Endothelial cell of umbilical vein (primary cell): ENCODE measurements at regions of chr11 and their contacts with region 1.

Region 1: DNA sequence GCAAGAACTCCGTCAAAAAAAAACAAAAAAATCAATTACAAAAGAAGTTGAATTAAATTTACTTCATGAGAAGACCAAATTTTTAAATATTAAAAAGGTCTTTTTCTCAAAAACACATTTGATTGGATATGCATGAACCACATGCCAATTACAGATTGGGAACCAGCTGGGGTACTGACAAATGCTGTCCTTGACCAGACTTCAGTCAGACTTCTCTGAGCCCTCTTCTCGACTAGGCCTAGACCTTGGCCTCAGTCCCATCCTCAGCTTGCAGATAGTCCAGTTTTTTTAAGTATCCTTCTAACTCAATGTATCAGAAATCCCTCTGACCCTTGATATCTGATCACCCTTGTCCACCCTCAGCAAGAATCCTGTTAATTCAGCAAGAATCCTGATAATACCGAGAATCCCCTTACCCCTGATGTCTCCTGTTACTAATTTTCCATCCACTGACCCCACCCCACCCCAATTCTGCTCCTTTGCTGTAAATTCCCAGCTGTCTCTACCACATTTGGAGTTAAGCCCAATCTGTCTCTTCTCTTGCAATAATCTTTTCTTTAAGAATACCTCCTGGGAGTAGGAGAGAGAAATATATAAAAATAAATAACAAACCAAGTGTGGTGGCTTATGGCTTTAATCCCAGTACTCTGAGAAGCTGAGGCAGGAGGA is 30.9 kb downstream of the OR4D9 start:
- DNase-seq: no peak
- H3K4me3 ChIP-seq: no peak overlapping the region
- H3K27ac ChIP-seq: no peak overlapping the region
- H3K4me1 ChIP-seq: peaks cover 14% of the 10 kb centered on the region
- H3K27me3 ChIP-seq: no peaks in the 10 kb centered on the region
- CTCF ChIP-seq: no peak
- POLR2A ChIP-seq: no peak

Region 2: DNA sequence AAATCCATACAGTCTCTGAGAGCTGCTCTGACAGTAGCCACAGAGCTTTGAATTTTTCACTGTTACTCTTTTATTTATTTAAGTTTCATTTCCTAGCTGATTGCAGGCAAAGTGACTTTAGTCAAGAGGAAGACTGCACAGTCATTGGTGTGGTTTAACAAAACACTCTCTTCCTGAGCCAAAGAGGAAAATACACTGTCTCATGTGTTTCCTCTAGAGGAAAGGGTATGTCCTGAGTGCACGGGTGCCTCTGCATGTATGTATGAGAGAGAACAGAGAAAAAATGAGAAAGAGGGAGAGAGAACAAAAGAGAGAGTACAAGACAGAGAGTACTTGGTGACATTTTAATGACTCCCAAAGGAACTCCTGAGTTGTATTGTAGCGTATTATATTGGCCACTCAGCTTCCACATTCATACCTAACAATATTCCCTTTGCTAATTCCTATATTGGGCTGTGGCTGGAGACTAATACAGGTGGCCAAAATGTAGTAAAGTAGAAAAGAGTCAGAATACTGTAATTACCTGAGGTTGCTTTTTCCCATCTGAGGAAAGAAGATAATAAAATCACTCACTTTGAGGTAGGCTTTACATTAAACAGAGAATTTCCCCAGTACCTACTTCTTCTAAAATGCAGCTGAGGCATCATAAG is 31.2 kb before region 1 on chr11 and contains the start of gene OR4D9:
- CTCF ChIA-PET with region 1: interaction called, 14 read pairs
- POLR2A ChIA-PET with region 1: no interaction called
- dilution Hi-C with region 1: no loop called
- intact Hi-C with region 1: no loop called
- DNase-seq: peak; percentile 83
- H3K4me3 ChIP-seq: peak within 1 kb of the TSS in 1 of 3 experiments; percentile 30
- H3K27ac ChIP-seq: peak within 1 kb of the TSS; percentile 50
- H3K4me1 ChIP-seq: peaks cover 17% of the 10 kb centered on the region
- H3K27me3 ChIP-seq: no peaks in the 10 kb centered on the region
- CTCF ChIP-seq: no peak
- POLR2A ChIP-seq: no peak
- total RNA-seq, gene OR4D9: not detected in 2 replicates

Region 3: DNA sequence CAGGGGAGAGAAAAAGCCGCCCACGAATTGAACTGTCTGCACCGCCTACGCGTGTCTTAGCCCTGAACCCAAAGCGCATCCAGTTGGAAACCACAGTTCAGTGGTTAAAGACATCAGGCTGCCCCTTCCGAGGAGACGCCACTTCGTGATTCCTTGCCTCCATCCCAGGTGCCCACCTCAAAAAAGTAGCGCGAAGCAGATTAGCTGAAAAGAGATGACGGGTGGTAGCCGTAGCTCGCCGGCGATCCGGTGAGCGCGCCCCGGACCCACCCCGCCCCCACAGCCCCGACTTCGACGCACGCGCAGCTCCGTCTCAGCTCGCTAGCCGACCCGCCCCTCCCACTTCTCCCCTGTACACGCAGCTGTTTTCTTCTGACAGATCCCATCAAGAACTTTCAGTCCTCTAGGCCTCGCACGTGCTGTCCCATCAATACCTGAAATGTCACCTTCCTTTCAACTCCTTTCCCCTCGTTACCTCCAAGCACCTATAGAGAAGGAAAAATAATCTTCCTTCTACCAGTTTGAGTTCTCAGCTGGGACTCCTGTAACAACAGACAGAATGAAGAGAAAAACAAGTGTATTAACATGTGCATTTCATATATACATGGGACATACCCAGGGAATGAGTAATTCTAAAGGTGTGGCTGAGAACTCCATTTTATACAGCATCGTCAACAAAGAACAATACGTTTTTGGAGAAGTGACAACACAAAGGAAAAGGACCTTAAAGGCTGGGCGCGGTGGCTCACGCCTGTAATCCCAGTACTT is 18.6 kb after region 1 on chr11:
- CTCF ChIA-PET with region 1: interaction called, 8 read pairs
- POLR2A ChIA-PET with region 1: interaction called, 7 read pairs
- dilution Hi-C with region 1: no loop called
- intact Hi-C with region 1: loop called (anchors 1 kb)
- DNase-seq: peak; percentile 88
- H3K4me3 ChIP-seq: peak overlapping the region; percentile 50 to 93 (median 70)
- H3K27ac ChIP-seq: peak overlapping the region; percentile 60
- H3K4me1 ChIP-seq: peaks cover 9% of the 10 kb centered on the region
- H3K27me3 ChIP-seq: no peaks in the 10 kb centered on the region
- CTCF ChIP-seq: no peak
- POLR2A ChIP-seq: no peak

Region 4: GRCh38 chr11:59615637-59616395 is 73.5 kb after region 1 on chr11 and contains the start of gene OSBP:
- CTCF ChIA-PET with region 1: interaction called, 8 read pairs
- POLR2A ChIA-PET with region 1: interaction called, 3 read pairs
- dilution Hi-C with region 1: no loop called
- intact Hi-C with region 1: loop called (anchors 2 kb)
- DNase-seq: peak; percentile 100
- H3K4me3 ChIP-seq: peak within 1 kb of the TSS; percentile 74 to 90 (median 81)
- H3K27ac ChIP-seq: peak within 1 kb of the TSS; percentile 62
- H3K4me1 ChIP-seq: peaks cover 17% of the 10 kb centered on the region
- H3K27me3 ChIP-seq: no peaks in the 10 kb centered on the region
- CTCF ChIP-seq: no peak
- POLR2A ChIP-seq: peak; percentile 84
- total RNA-seq, gene OSBP: 37.5 and 37.9 TPM in 2 replicates

Region 5: GRCh38 chr11:59680287-59681154 is 138.2 kb after region 1 on chr11:
- CTCF ChIA-PET with region 1: interaction called, 13 read pairs
- POLR2A ChIA-PET with region 1: no interaction called
- dilution Hi-C with region 1: no loop called
- intact Hi-C with region 1: loop called (anchors 1 kb)
- DNase-seq: peak; percentile 81
- H3K4me3 ChIP-seq: no peak overlapping the region
- H3K27ac ChIP-seq: no peak overlapping the region
- H3K4me1 ChIP-seq: no peaks in the 10 kb centered on the region
- H3K27me3 ChIP-seq: peaks cover 2% of the 10 kb centered on the region in 2 experiments
- CTCF ChIP-seq: peak; percentile 76 to 78
- POLR2A ChIP-seq: no peak

Region 6: GRCh38 chr11:59891781-59892181 is 349.5 kb after region 1 on chr11:
- CTCF ChIA-PET with region 1: no interaction called
- POLR2A ChIA-PET with region 1: no interaction called
- dilution Hi-C with region 1: no loop called
- intact Hi-C with region 1: no loop called
- DNase-seq: no peak
- H3K4me3 ChIP-seq: no peak overlapping the region
- H3K27ac ChIP-seq: no peak overlapping the region
- H3K4me1 ChIP-seq: no peaks in the 10 kb centered on the region
- H3K27me3 ChIP-seq: peaks cover 0 to 3% of the 10 kb centered on the region in 2 experiments
- CTCF ChIP-seq: no peak
- POLR2A ChIP-seq: no peak